ENCODE measurements at regions of chr3 and their contacts with region 1.

Region 1: GRCh38 chr3:115814778-115815380 is 191.6 kb downstream of the GAP43 start:
- DNase-seq: peak; percentile 45
- H3K4me3 Mint-ChIP-seq: no peak overlapping the region
- H3K27ac Mint-ChIP-seq: no peak overlapping the region
- H3K4me1 Mint-ChIP-seq: no peaks in the 10 kb centered on the region
- H3K27me3 Mint-ChIP-seq: peaks cover 16% of the 10 kb centered on the region

Region 2: DNA sequence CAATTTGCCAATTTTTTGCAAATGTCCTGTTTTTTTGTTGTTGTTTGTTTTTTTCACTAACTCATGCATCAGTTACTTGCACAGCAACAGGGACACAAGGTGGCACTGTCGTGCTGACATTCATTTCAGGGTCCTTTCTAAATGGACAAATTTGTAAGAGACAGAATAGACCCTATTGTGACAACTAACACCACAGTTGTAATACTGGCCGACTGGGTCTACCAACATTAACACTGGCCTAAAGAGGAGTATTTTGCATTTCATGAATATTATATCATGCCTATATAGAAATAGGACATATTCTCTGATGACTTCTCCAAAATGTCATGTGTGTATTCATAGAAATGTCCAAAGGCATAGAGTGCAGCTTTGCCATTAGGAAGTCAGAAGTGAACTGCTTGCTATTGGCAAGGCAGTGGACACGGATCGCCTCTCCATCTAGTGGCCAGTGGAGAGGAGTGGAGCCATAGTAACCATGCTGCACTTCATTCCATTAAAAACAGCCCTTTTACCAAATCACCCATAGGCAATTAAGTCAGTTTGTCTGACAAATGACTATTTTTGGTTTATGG is 722.6 kb before region 1 on chr3:
- intact Hi-C with region 1: loop called (anchors 5 kb)
- DNase-seq: peak; percentile 15
- H3K4me3 Mint-ChIP-seq: no peak overlapping the region
- H3K27ac Mint-ChIP-seq: no peak overlapping the region
- H3K4me1 Mint-ChIP-seq: no peaks in the 10 kb centered on the region
- H3K27me3 Mint-ChIP-seq: no peaks in the 10 kb centered on the region

Region 3: GRCh38 chr3:115217678-115218451 is 597.0 kb before region 1 on chr3:
- intact Hi-C with region 1: loop called (anchors 2 kb)
- DNase-seq: no peak
- H3K4me3 Mint-ChIP-seq: no peak overlapping the region
- H3K27ac Mint-ChIP-seq: no peak overlapping the region
- H3K4me1 Mint-ChIP-seq: no peaks in the 10 kb centered on the region
- H3K27me3 Mint-ChIP-seq: peaks cover 14% of the 10 kb centered on the region

Region 4: DNA sequence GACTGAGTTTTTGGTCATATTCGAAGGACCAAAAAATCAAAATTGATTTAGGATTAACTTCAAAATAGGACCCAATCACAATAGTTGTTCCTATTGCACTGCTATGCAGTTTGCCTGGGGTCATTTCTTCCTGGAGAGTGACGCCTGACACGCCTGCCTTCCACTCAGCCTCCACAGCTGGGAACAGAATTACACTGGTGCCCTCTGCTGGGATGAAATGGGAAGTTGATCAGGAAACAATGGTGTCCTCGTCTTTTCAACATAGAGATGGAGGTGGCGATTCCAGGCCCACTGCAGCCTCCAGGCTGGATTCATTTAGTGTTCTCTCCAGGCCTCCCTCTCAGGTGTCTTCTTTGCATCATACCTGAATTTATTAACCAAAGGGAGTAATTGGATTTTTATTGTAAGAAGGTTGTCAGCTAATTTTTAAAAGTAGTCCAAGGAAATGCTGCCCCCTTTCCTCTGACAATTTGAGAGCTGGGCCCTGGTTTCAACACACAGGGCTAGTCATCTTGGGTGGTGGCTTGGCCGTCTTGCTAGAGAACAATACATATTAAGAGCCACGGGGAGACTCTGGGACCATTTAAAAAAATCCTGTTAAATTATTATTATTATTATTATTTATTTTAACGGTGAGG is 121.9 kb before region 1 on chr3:
- intact Hi-C with region 1: loop called (anchors 2 kb)
- DNase-seq: peak; percentile 47
- H3K4me3 Mint-ChIP-seq: no peak overlapping the region
- H3K27ac Mint-ChIP-seq: no peak overlapping the region
- H3K4me1 Mint-ChIP-seq: no peaks in the 10 kb centered on the region
- H3K27me3 Mint-ChIP-seq: peaks cover 15% of the 10 kb centered on the region

Region 5: GRCh38 chr3:115783938-115784738 is 30.7 kb before region 1 on chr3:
- intact Hi-C with region 1: loop called (anchors 2 kb)
- DNase-seq: peak; percentile 85
- H3K4me3 Mint-ChIP-seq: peak overlapping the region; percentile 82
- H3K27ac Mint-ChIP-seq: peak overlapping the region; percentile 96
- H3K4me1 Mint-ChIP-seq: peaks cover 18% of the 10 kb centered on the region
- H3K27me3 Mint-ChIP-seq: peaks cover 15% of the 10 kb centered on the region

Measured in activated T-helper 2 cell treated with anti-CD3 and anti-CD28 coated beads, Interferon-gamma antibody, Interleukin-2, Interleukin-4, amounts not matched to agents 10 μg/mL and 5 μg/mL and 100 μg/mL, durations not matched to agents 14 hours and 24 hours and 36 hours (primary cell).